ENCODE measurements at regions of chr10 and their contacts with region 1.

Region 1: DNA sequence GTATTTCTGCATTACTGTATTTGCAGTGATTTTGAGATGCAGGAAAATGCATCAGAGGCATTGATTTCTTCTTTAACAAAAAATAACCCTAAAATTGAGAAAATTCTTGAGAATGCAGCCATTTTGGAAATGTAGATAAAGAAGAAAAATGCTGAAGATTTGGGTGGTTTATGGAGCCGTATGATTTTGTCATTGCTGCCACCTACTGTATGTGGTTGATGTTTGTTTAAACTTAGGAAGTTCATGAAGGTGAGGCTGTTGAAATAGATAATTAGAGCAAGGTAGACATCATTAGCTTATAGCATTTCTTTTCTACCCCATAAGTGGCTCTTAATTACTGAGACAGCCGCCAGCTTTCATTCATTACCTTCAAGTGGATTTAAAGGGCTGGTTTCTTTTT is 92.1 kb upstream of the SAMD8 start:
- DNase-seq: peak in 2 of 4 experiments; percentile 40 to 44
- ATAC-seq: peak; percentile 62
- H3K4me3 ChIP-seq: no peak overlapping the region
- H3K27ac ChIP-seq: no peak overlapping the region
- H3K4me1 ChIP-seq: no peaks in the 10 kb centered on the region
- H3K27me3 ChIP-seq: no peaks in the 10 kb centered on the region
- CTCF ChIP-seq: peak; percentile 40 to 67 (median 42); a peak in 5 of 6 replicates
- EP300 ChIP-seq: no peak
- POLR2A ChIP-seq: no peak
- RAD21 ChIP-seq: peak; percentile 83 to 85

Region 2: DNA sequence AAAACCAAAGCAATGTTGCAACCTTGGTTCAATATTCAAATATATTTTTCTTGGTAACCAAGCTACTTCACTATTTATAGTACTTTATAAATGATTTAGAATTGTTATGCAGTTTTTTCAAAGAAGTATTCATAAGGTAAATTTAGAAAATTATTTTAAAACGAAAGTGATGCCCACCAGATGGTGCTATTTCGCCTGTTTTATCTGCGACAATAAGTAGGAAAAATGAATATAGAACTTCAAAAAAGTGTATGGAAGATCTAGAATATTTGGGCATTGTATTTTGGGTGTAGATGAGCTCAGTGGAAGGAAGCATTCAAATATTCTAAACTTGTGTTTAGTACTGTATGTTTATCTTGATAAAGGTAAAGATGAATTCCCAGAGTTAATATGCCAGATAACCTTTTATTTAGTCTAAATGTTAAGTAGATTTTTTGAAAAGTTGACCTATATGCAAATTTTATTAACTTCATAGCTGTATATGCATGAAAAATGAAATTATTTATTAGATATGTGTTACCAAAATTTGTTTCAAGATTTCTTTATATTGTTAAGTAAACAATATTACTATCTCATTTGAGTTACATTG is 775.2 kb before region 1 on chr10:
- CTCF ChIA-PET with region 1: interaction called, 68 read pairs
- POLR2A ChIA-PET with region 1: interaction called, 3 read pairs
- in situ Hi-C with region 1: no loop called
- intact Hi-C with region 1: loop called (anchors 5 kb)
- DNase-seq: peak in 1 of 4 experiments; percentile 69
- ATAC-seq: no peak
- H3K4me3 ChIP-seq: no peak overlapping the region
- H3K27ac ChIP-seq: no peak overlapping the region
- H3K4me1 ChIP-seq: peaks cover 9 to 14% of the 10 kb centered on the region in 2 experiments; a peak in 4 of 5 replicates
- H3K27me3 ChIP-seq: no peaks in the 10 kb centered on the region
- CTCF ChIP-seq: peak in 2 of 3 experiments; percentile 43 to 73; a peak in 4 of 6 replicates
- EP300 ChIP-seq: no peak
- POLR2A ChIP-seq: no peak
- RAD21 ChIP-seq: peak; percentile 72 to 75

Region 3: GRCh38 chr10:74262856-74263255 is 756.5 kb before region 1 on chr10:
- CTCF ChIA-PET with region 1: interaction called, 21 read pairs
- POLR2A ChIA-PET with region 1: no interaction called
- in situ Hi-C with region 1: no loop called
- intact Hi-C with region 1: loop called (anchors 1 kb)
- DNase-seq: no peak
- ATAC-seq: no peak
- H3K4me3 ChIP-seq: no peak overlapping the region
- H3K27ac ChIP-seq: no peak overlapping the region
- H3K4me1 ChIP-seq: no peaks in the 10 kb centered on the region
- H3K27me3 ChIP-seq: no peaks in the 10 kb centered on the region
- CTCF ChIP-seq: no peak
- EP300 ChIP-seq: no peak
- POLR2A ChIP-seq: no peak
- RAD21 ChIP-seq: no peak

Region 4: DNA sequence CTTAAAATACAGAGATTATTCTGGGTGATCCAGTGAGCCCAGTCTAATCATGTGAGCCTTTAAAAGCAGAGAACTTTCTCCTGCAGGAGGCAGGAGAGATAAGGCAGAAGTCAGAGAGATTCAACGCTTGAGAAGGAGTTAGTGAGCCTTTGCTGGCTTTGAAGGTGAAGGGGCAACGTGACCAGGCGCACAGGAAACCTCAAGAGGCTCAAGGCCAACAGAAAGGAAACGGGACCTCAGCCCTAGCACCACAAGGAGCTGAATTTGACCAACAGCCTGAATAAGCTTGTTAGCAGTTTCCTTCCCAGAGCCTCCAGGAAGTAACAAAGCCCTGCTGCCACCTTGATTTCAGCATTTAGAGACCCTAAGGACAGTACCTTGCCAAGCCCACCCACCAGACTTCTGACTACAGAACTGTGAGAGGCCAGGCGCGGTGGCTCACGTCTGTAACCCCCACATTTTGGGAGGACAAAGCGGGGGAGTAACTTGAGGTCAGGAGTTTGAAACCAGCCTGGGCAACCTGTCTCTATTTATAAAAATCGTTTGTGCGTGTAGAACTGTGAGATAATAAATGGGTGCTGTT is 280.3 kb before region 1 on chr10:
- CTCF ChIA-PET with region 1: interaction called, 4 read pairs
- POLR2A ChIA-PET with region 1: interaction called, 4 read pairs
- in situ Hi-C with region 1: no loop called
- intact Hi-C with region 1: loop called (anchors 1 kb)
- DNase-seq: peak in 2 of 4 experiments; percentile 55 to 74
- ATAC-seq: peak; percentile 91
- H3K4me3 ChIP-seq: no peak overlapping the region
- H3K27ac ChIP-seq: no peak overlapping the region
- H3K4me1 ChIP-seq: peaks cover 3 to 7% of the 10 kb centered on the region in 2 experiments; a peak in 3 of 5 replicates
- H3K27me3 ChIP-seq: no peaks in the 10 kb centered on the region
- CTCF ChIP-seq: peak; percentile 56 to 79 (median 63)
- EP300 ChIP-seq: no peak
- POLR2A ChIP-seq: no peak
- RAD21 ChIP-seq: peak; percentile 81 to 88

Region 5: DNA sequence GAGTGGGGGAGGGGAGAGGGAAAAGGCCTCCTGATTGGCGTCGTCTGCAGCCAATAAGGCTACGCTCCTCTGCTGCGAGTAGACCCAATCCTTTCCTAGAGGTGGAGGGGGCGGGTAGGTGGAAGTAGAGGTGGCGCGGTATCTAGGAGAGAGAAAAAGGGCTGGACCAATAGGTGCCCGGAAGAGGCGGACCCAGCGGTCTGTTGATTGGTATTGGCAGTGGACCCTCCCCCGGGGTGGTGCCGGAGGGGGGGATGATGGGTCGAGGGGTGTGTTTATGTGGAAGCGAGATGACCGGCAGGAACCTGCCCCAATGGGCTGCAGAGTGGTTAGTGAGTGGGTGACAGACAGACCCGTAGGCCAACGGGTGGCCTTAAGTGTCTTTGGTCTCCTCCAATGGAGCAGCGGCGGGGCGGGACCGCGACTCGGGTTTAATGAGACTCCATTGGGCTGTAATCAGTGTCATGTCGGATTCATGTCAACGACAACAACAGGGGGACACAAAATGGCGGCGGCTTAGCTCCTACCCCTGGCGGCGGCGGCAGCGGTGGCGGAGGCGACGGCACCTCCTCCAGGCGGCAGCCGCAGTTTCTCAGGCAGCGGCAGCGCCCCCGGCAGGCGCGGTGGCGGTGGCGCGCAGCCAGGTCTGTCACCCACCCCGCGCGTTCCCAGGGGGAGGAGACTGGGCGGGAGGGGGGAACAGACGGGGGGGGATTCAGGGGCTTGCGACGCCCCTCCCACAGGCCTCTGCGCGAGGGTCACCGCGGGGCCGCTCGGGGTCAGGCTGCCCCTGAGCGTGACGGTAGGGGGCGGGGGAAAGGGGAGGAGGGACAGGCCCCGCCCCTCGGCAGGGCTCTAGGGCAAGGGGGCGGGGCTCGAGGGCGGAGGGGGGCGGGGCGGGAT is 193.0 kb before region 1 on chr10 and contains the start of gene KAT6B:
- CTCF ChIA-PET with region 1: no interaction called
- POLR2A ChIA-PET with region 1: no interaction called
- in situ Hi-C with region 1: no loop called
- intact Hi-C with region 1: loop called (anchors 10 kb)
- DNase-seq: peak; percentile 97 to 100 (median 98)
- ATAC-seq: peak; percentile 95
- H3K4me3 ChIP-seq: peak within 1 kb of the TSS; percentile 73
- H3K27ac ChIP-seq: peak within 1 kb of the TSS; percentile 90
- H3K4me1 ChIP-seq: peaks cover 33 to 36% of the 10 kb centered on the region in 2 experiments
- H3K27me3 ChIP-seq: no peaks in the 10 kb centered on the region
- CTCF ChIP-seq: peak; percentile 44 to 94 (median 50); a peak in 5 of 6 replicates
- EP300 ChIP-seq: 0 out of 2 replicates have a peak, but pooled peaks have one; percentile 7
- POLR2A ChIP-seq: peak; percentile 87
- RAD21 ChIP-seq: peak in 1 of 2 experiments; percentile 20; a peak in 1 of 4 replicates
- polyA plus RNA-seq, gene KAT6B: 1.4 to 2.4 TPM

Region 6: GRCh38 chr10:74949434-74949833 is 69.9 kb before region 1 on chr10:
- CTCF ChIA-PET with region 1: no interaction called
- POLR2A ChIA-PET with region 1: no interaction called
- in situ Hi-C with region 1: no loop called
- intact Hi-C with region 1: no loop called
- DNase-seq: no peak
- ATAC-seq: no peak
- H3K4me3 ChIP-seq: no peak overlapping the region
- H3K27ac ChIP-seq: no peak overlapping the region
- H3K4me1 ChIP-seq: no peaks in the 10 kb centered on the region
- H3K27me3 ChIP-seq: peaks cover 0 to 7% of the 10 kb centered on the region in 2 experiments; a peak in 2 of 5 replicates
- CTCF ChIP-seq: no peak
- EP300 ChIP-seq: no peak
- POLR2A ChIP-seq: no peak
- RAD21 ChIP-seq: no peak